ENCODE measurements at regions of chr15 and their contacts with region 1.

Region 1: DNA sequence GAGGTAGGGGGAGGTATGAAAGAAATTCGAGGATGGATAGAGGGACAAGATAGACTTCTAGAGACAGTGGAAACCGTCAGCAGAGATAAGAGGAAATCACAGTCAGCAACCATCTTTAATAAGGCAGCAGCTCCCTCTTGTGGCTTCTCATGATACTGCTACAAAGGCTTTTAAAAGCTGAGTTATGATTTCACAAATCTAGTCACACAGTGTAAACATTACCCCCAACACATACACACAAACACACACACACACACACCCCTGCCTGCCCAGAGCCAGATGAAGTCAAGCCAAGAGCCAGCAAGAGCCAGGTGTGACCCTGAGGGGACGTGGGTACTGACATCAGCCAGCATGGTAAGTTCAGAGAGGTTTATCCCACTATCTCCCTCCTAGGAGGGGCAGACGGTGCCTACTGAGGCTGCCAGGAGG is 18.9 kb upstream of the TGM5 start:
- DNase-seq: peak in 4 of 10 donors; percentile 10 to 60 (median 44)
- H3K4me3 ChIP-seq: no peak overlapping the region
- H3K27ac ChIP-seq: no peak overlapping the region
- H3K27me3 ChIP-seq: no peaks in the 10 kb centered on the region
- CTCF ChIP-seq: peak; percentile 49 to 89 (median 82)

Region 2: DNA sequence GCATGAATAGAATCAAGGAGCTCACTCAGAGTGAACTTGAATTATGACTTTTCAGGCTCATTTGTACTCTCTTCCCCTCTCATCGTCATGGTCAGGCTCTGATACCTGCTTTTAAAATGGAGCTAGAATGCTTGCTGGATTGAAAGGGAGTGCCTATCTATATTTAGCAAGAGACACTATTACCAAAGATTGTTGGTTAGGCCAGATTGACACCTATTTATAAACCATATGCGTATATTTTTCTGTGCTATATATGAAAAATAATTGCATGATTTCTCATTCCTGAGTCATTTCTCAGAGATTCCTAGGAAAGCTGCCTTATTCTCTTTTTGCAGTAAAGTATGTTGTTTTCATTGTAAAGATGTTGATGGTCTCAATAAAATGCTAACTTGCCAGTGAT is 90.8 kb before region 1 on chr15:
- intact Hi-C with region 1: no loop called
- DNase-seq: no peak
- H3K4me3 ChIP-seq: no peak overlapping the region
- H3K27ac ChIP-seq: no peak overlapping the region
- H3K27me3 ChIP-seq: no peaks in the 10 kb centered on the region
- CTCF ChIP-seq: no peak

Region 3: GRCh38 chr15:43225201-43225949 is 60.2 kb before region 1 on chr15:
- intact Hi-C with region 1: loop called (anchors 2 to 5 kb)
- DNase-seq: peak in 3 of 10 donors; percentile 23 to 39 (median 36)
- H3K4me3 ChIP-seq: no peak overlapping the region
- H3K27ac ChIP-seq: no peak overlapping the region
- H3K27me3 ChIP-seq: peaks cover 0 to 5% (median 0%) of the 10 kb centered on the region in 45 donors
- CTCF ChIP-seq: peak; percentile 10 to 82 (median 69)

Region 4: DNA sequence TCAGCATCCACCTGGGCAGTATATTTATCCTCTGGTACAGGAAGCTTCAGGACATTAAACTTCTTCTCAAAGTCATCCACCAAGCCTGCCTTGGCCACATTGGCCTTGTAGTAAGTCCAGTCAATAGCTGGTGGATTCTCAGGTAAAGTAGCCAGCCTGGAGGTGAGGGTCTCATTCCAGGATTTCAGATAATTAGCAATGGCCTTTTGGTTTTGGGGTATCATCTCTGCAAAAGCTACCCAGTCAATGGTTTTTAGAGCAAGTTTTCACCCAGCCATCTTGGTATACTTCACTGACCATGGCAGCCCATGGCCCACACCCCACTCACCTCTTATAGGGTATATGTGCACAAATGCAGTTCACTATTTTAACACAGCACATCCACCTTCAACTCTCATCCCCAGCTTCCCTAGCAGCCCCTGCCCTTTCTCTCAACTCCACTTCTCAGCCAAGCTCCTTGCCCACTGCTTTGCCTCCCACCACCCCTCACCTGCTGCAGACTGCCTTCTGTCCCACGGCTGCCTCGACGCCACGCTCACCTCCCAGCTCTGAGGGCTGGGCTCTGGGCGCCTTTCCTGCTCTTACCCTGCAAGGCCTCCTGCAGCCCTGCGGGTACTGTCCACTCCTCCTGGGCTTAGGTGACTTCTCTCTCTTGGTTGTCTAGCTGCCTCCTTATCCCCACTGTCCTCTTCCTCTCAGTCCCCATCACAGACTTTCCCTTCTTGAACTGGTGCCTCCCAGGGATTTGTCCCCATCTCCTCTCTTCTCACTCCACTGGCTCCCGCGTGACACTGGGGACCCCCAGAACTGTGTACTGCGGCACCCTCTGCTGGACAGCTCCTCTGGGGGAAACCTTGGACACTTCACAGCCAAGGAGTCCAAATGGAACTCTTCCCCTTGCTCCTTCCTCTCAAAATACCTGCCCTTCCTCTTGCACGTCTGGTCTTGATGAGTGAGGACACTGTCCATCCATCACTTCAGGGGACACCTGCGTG is 17.2 kb before region 1 on chr15:
- intact Hi-C with region 1: no loop called
- DNase-seq: no peak
- H3K4me3 ChIP-seq: no peak overlapping the region
- H3K27ac ChIP-seq: no peak overlapping the region
- H3K27me3 ChIP-seq: peaks cover 0 to 11% (median 0%) of the 10 kb centered on the region in 45 donors
- CTCF ChIP-seq: peak in 16 of 56 donors; percentile 9 to 43 (median 23)